Activated naive CD4-positive, alpha-beta T cell treated with anti-CD3 and anti-CD28 coated beads for 36 hours (primary cell): ENCODE measurements at regions of chr7 and their contacts with region 1.

Region 1: DNA sequence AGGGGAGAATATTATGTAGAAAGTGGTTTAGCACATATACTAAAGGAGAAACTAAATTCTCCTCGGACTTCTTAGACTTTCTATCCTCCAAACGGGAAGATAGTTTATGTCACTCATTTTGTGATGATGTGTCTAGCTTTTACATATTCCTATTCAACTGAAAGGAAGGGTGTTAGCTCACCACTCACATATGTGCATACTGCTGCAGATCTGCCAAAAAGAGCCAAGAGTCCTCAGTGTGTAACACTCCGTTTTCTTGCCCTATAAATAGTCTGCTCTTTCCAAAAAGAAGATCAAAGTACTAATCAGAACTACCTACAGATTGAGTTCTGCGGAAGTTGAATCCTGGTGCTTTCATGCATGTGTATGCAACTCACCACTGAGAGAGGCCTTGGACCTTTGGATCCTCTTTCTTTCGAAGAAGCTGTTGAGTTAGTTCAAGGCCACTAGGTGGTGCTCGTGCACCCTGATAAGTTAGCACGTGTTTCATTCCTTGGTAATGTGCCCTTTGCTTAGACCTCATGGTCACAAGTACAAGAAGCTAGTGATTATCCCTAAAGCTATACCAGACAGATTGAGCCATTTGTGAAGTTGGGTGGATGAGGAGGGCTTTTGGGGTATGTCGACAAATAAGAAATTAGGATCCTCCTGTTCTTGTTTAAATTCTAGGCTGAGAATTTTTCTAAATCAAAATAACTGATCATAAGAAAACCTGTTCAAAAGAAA is 14.1 kb downstream of the YAE1 start:
- DNase-seq: peak; percentile 89
- H3K4me3 Mint-ChIP-seq: no peak overlapping the region
- H3K27ac Mint-ChIP-seq: no peak overlapping the region
- H3K4me1 Mint-ChIP-seq: peaks cover 11% of the 10 kb centered on the region
- H3K27me3 Mint-ChIP-seq: no peaks in the 10 kb centered on the region

Region 2: DNA sequence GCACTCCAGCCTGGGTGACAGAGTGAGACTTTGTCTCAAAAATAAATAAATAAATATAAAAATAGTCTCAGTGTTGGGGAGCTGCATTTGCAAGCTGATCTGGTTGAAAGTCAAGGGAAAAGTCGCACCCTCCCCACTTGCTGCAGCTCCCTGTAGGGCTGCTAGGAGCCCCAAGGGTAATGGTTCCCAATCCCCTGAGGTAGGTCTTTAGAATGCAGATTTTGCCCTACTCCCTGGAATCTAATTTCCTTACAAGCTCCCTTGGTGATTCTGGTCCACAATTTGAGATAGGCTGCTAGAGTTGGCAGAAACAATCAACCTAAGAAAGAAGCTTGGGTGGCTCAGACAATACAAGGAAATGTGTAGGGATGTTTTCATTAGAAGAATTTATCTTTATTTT is 246.6 kb before region 1 on chr7:
- CTCF ChIA-PET with region 1: no interaction called
- intact Hi-C with region 1: no loop called
- DNase-seq: no peak
- H3K4me3 Mint-ChIP-seq: no peak overlapping the region
- H3K27ac Mint-ChIP-seq: no peak overlapping the region
- H3K4me1 Mint-ChIP-seq: no peaks in the 10 kb centered on the region
- H3K27me3 Mint-ChIP-seq: peaks cover 3% of the 10 kb centered on the region

Region 3: GRCh38 chr7:39488467-39489393 is 91.6 kb before region 1 on chr7:
- CTCF ChIA-PET with region 1: no interaction called
- intact Hi-C with region 1: no loop called
- DNase-seq: no peak
- H3K4me3 Mint-ChIP-seq: no peak overlapping the region
- H3K27ac Mint-ChIP-seq: no peak overlapping the region
- H3K4me1 Mint-ChIP-seq: no peaks in the 10 kb centered on the region
- H3K27me3 Mint-ChIP-seq: peaks cover 15% of the 10 kb centered on the region

Region 4: DNA sequence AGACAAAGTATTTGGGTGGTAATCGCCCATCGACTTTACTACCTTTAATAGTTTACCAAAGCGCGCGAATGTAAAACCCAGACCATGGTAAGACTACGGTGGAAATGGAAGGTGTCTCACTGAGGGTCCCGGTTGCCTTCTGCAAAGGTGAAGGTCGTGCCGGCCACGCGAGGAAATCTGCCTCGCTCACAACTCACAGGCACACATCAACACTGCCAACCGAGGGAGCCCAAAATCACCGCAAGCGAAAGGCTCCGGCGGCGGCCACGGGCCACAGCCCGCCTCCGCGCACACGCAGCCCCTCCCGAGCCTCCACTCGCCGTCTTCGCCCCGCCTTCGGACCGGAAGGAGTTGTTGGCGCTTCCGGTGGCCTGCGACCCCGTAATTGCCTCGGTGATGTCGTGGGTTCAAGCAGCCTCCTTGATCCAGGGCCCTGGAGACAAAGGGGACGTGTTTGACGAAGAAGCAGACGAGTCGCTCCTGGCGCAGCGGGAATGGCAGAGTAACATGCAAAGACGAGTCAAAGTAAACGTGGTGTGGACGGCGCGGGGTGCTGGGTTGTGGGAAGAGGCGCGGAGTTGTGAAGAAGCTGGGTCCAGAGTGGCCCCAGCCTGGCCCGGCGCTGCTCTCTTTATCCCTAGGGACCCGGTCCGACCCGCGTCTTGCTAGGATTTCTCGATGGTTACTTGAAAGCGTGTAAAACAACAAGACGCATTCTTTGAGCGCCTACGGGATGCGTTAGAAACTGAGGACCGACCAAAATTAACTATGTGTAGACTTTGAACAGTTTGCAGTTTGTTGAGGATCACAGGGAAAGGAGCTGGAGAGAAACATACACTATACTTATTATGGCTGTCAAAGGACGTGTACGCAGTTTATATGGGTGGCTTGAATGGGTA is 14.0 kb before region 1 on chr7 and contains the start of gene YAE1:
- CTCF ChIA-PET with region 1: interaction called, 14 read pairs
- intact Hi-C with region 1: loop called (anchors 1 kb)
- DNase-seq: peak; percentile 86
- H3K4me3 Mint-ChIP-seq: peak within 1 kb of the TSS; percentile 97
- H3K27ac Mint-ChIP-seq: peak within 1 kb of the TSS; percentile 95
- H3K4me1 Mint-ChIP-seq: peaks cover 18% of the 10 kb centered on the region
- H3K27me3 Mint-ChIP-seq: no peaks in the 10 kb centered on the region
- total RNA-seq, gene YAE1: 4.6 to 5.5 TPM

Region 5: DNA sequence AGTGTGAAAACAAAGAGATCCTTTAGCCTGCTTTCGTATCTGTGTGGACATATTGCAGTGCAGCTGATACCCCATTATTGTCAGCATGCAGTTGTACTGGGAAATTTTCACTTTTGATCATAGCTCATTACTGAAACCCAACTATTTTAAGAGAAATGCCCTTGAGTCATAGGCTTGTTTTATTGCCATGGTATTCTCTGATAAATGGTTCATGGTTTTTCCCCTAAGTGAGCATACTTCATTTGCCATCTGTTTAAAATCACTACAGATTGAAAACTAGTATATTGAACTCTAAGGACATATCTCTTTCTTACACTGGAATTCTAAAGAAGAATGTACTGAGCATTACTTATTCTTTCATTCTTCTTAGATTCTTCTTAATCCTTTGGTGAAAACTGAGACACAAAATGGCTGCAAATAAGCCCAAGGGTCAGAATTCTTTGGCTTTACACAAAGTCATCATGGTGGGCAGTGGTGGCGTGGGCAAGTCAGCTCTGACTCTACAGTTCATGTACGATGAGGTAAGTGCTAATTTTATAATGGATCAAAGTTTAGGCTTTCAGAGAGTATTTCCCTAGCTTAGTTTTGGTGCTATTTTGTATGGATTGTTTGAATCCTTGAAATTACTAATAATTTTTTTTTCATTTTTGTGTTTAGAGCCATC is 106.1 kb after region 1 on chr7:
- CTCF ChIA-PET with region 1: interaction called, 12 read pairs
- intact Hi-C with region 1: no loop called
- DNase-seq: no peak
- H3K4me3 Mint-ChIP-seq: no peak overlapping the region
- H3K27ac Mint-ChIP-seq: peak overlapping the region; percentile 69
- H3K4me1 Mint-ChIP-seq: peaks cover 65% of the 10 kb centered on the region
- H3K27me3 Mint-ChIP-seq: no peaks in the 10 kb centered on the region

Region 6: DNA sequence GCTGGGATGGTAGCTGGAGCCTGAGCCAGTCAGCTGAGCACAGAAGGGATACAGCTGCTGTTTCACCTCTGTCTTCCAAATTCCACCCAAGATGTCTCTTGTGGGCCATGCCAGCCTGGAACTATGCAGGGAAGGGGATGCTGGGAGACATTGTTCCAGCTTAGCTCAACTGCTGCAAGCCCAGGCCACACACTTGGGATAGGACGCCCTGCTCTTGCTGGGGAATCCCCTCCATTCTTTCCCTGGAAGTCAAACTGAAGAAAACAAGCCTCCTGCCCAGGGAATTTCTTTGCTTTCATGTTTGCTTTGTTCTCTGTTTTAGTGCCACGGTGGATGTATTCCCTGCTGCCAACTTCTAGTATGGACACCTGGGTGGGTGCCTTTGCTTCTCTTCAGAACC is 314.6 kb after region 1 on chr7:
- CTCF ChIA-PET with region 1: interaction called, 6 read pairs
- intact Hi-C with region 1: loop called (anchors 5 kb)
- DNase-seq: no peak
- H3K4me3 Mint-ChIP-seq: no peak overlapping the region
- H3K27ac Mint-ChIP-seq: no peak overlapping the region
- H3K4me1 Mint-ChIP-seq: no peaks in the 10 kb centered on the region
- H3K27me3 Mint-ChIP-seq: no peaks in the 10 kb centered on the region

Region 7: GRCh38 chr7:40134428-40135316 is 554.4 kb after region 1 on chr7 and contains the starts of genes MPLKIP and SUGCT:
- CTCF ChIA-PET with region 1: no interaction called
- intact Hi-C with region 1: loop called (anchors 5 kb)
- DNase-seq: peak; percentile 87
- H3K4me3 Mint-ChIP-seq: peak within 1 kb of the TSS; percentile 93
- H3K27ac Mint-ChIP-seq: peak within 1 kb of the TSS; percentile 96
- H3K4me1 Mint-ChIP-seq: peaks cover 26% of the 10 kb centered on the region
- H3K27me3 Mint-ChIP-seq: no peaks in the 10 kb centered on the region
- total RNA-seq, gene MPLKIP: 38.1 to 38.8 TPM
- total RNA-seq, gene SUGCT: 0.81 to 1.2 TPM